Dorsolateral prefrontal cortex (tissue), 120 donors: ENCODE measurements at regions of chr7 and their contacts with region 1.

Region 1: DNA sequence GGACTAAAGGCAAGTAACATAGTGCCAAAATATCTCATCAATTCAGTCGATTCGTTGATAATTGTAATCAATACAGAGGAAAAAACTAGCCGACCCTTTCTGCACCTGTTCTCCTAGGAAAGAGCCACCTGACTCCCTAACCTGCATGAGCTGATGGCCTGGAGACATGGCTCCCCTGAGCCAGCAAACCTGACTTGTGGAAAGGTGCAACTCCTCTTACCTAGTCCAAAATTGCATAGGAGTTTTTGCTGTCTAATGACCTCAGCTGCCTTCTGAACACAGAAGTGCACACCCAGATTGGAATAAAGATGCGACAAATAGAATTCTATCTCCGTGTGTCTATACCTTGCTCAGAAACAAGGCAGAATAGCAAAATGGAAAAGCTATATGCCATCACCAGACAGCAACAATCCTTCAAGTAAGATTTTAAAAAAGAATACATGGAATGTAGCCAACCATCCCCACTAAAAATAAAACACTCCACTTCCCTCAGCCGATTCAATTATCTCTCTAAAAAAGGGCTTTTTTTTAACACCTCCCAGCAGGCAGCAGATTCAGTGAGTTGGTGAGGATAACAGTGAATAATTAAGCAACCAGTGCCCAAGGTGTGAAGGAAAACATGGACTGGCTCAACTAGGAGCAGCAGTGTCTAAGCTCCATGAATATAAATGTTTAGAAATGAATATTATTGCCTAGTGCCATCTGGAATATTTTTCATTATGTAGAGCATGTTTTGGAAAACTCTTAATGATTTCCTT is 26.6 kb upstream of the LMTK2 start:
- DNase-seq: peak in 2 of 10 donors; percentile 5 to 40
- H3K4me3 ChIP-seq: no peak overlapping the region
- H3K27ac ChIP-seq: peak overlapping the region in 1 of 59 donors; percentile 40
- H3K27me3 ChIP-seq: no peaks in the 10 kb centered on the region
- CTCF ChIP-seq: no peak

Region 2: DNA sequence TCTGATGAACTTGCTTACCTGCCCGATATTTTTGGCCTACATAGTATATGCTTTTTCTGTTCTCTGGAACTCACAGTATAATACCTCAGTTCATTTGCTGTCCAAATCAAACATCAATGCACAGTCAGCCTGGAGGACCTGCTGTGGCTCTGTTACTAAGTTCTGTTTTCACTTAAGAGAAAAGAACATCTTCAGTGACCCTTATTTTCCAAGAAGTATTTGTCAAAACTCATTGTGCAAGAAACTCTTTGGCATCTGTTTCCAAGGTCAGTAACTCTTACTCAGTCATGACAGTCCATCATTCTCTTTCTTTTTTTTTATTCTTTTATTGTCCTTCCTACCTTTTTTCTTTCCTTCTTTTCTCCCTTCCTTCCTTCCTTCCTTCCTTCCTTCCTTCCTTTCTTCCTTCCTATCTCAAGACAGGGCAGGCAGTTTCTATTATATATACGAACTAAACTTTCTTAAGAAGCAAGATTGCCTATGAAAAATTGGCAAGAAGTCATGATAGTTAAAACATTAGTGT is 1332.6 kb before region 1 on chr7:
- intact Hi-C with region 1: no loop called
- DNase-seq: no peak
- H3K4me3 ChIP-seq: no peak overlapping the region
- H3K27ac ChIP-seq: no peak overlapping the region
- H3K27me3 ChIP-seq: no peaks in the 10 kb centered on the region
- CTCF ChIP-seq: no peak

Region 3: DNA sequence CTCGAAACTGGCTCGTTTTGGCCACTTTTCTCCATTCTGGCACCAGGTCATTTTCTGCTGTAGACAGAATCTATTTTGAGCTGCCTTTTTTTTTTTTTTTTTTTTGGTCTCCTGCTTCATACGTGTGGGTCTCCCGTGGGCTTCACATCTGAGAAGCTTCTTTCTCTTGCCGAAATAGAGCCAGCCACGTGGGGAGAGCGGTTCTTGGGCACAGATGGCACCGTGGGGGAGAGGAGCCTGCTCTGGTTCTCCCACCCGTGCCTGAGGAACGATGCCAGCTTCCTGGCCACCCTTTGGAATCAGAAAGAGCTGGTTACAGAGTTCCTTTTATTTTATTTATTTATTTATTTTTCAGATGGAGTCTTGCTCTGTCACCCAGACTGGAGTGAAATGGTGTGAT is 41.3 kb before region 1 on chr7:
- intact Hi-C with region 1: loop called in 1 of 2 experiments (anchors 2 kb)
- DNase-seq: peak; percentile 41 to 90 (median 82)
- H3K4me3 ChIP-seq: peak overlapping the region in 40 of 59 donors; percentile 0 to 51 (median 28)
- H3K27ac ChIP-seq: peak overlapping the region in 46 of 59 donors; percentile 2 to 77 (median 54)
- H3K27me3 ChIP-seq: peaks cover 0 to 2% (median 0%) of the 10 kb centered on the region in 45 donors
- CTCF ChIP-seq: no peak

Region 4: GRCh38 chr7:98276195-98276761 is 196.2 kb after region 1 on chr7:
- intact Hi-C with region 1: no loop called
- DNase-seq: no peak
- H3K4me3 ChIP-seq: no peak overlapping the region
- H3K27ac ChIP-seq: peak overlapping the region in 2 of 59 donors; percentile 4 to 36
- H3K27me3 ChIP-seq: no peaks in the 10 kb centered on the region
- CTCF ChIP-seq: no peak